Dorsolateral prefrontal cortex (tissue), 120 donors: ENCODE measurements at regions of chrX and their contacts with region 1.

Region 1: DNA sequence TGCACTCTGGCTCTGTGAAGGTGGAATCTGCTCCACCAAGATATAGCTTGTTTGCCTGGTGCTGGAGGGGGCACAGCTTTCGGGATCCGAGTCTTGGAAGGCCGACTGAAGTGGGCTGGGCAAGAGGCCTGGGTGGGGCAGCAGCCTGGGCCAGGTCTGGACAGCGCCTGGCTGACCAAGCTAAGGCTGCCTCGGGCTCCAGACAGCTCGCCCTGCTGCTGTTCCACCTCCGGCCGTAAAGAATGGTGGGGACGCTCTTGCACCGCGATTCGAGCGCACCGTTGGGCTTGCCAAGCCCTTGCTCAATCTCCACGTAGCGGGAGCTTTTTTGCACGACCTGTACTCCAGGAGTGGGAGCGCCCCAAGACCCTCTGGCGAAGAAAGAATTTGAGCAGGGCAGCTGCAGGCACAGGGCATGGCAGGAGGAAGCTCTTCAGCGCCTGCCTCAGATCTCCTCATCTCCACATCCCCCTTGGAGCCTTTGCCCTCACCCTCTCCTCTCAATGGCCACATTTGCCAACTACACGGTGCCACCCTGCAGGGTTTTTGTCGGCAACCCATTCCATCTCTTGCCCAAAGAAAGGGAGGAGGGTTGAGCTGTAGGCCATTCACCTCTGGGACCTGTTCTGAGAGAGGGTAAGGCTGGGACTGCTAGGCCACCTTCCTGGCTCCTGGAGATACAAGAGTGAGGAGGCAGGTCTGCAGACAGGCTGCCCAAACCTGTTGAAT is 18.9 kb downstream of the CNGA2 start:
- DNase-seq: peak in 8 of 10 donors; percentile 18 to 76 (median 41)
- H3K4me3 ChIP-seq: no peak overlapping the region
- H3K27ac ChIP-seq: no peak overlapping the region
- H3K27me3 ChIP-seq: peaks cover 0 to 80% (median 47%) of the 10 kb centered on the region in 45 donors
- CTCF ChIP-seq: peak; percentile 35 to 78 (median 72)

Region 2: GRCh38 chrX:151346931-151347543 is 406.4 kb before region 1 on chrX:
- intact Hi-C with region 1: no loop called
- DNase-seq: no peak
- H3K4me3 ChIP-seq: no peak overlapping the region
- H3K27ac ChIP-seq: no peak overlapping the region
- H3K27me3 ChIP-seq: peaks cover 0 to 48% (median 10%) of the 10 kb centered on the region in 45 donors
- CTCF ChIP-seq: no peak

Region 3: GRCh38 chrX:151609222-151609621 is 144.3 kb before region 1 on chrX:
- intact Hi-C with region 1: no loop called
- DNase-seq: no peak
- H3K4me3 ChIP-seq: no peak overlapping the region
- H3K27ac ChIP-seq: no peak overlapping the region
- H3K27me3 ChIP-seq: peaks cover 0 to 54% (median 6%) of the 10 kb centered on the region in 45 donors
- CTCF ChIP-seq: no peak

Region 4: GRCh38 chrX:151713859-151714258 is 39.6 kb before region 1 on chrX:
- intact Hi-C with region 1: no loop called
- DNase-seq: no peak
- H3K4me3 ChIP-seq: no peak overlapping the region
- H3K27ac ChIP-seq: no peak overlapping the region
- H3K27me3 ChIP-seq: peaks cover 0 to 85% (median 20%) of the 10 kb centered on the region in 45 donors
- CTCF ChIP-seq: peak in 34 of 56 donors; percentile 14 to 45 (median 27)

Region 5: DNA sequence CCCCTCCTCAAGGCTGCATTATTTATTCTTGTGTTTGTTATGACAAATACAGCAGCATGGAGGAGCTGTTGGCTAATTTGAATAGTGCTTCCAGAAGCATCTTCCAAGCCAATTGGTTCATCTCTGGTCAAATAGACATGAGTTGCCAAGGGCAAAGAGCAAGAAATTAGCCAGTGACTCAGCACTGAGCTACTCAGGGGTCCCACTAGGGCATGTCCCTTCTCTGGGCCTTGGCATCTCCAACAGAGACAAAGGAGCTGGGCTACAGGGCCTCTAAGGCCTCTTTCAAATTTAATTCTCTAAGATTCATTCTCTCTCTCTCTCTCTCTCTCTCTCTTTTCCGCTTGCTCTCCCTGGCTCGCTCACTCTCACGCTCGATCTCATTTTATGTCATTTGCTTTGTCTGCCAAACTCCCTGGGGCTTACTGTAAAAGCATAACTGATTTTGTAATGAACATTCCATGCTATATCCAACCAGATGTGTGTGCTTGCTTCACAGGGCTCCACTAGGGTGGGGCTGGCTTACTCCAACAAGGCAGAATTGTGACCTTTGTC is 72.5 kb after region 1 on chrX:
- intact Hi-C with region 1: no loop called
- DNase-seq: no peak
- H3K4me3 ChIP-seq: no peak overlapping the region
- H3K27ac ChIP-seq: no peak overlapping the region
- H3K27me3 ChIP-seq: peaks cover 0 to 89% (median 41%) of the 10 kb centered on the region in 45 donors
- CTCF ChIP-seq: peak in 1 of 56 donors; percentile 9

Region 6: DNA sequence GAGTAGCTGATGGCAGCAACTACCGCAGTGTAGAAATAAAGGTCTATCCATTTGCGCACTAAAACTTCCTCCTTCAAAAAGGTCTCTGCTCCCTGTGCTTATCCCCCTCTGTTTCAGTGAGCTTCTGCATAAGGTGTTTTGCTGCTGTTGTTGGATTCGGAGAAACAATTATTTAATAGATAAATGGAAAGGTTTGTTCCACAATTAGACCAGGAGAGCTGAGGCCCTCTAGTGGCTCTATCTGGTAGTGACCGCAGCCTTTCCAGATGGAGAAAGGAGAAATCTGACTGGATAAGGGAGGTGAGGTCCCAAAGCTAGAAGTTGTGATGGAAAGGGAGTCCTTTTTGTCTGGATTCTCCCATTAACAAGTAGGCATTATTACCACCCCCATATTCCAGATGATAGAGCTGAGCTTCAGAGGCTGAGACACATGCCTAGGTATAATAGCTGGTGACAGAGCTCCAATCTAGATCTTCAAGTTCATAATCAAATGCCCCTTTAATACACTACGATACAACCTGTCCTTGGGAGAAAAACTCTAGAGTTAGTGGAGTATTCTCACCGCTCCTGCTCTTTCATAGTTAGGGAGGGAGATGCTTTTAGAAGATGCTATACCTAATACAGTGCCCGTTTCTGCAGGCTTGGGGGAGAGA is 879.1 kb after region 1 on chrX:
- intact Hi-C with region 1: loop called (anchors 2 kb)
- DNase-seq: peak in 6 of 10 donors; percentile 22 to 76 (median 58)
- H3K4me3 ChIP-seq: no peak overlapping the region
- H3K27ac ChIP-seq: no peak overlapping the region
- H3K27me3 ChIP-seq: peaks cover 0 to 78% (median 25%) of the 10 kb centered on the region in 45 donors
- CTCF ChIP-seq: peak; percentile 54 to 88 (median 76)

Region 7: DNA sequence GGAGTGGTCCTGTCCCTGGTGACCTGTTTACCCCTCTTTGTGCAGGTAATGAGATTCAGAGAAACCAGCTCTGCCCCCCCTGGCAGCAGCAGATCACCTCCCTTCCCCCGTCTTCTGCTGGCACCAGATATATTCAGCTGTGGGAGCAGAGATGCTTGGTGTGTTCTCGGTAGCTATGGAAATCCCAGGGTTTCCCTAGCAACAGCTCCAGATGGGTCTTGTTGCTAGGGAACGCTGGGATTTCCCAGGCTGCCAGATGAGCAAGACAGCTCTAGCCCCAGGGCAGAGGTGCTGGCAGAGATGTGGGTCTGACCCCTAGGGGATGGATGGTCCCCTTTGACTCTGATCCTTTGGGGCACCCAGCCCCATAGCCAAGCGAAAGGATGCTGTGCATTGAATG is 1056.9 kb after region 1 on chrX:
- intact Hi-C with region 1: loop called (anchors 5 kb)
- DNase-seq: peak in 4 of 10 donors; percentile 17 to 52 (median 44)
- H3K4me3 ChIP-seq: no peak overlapping the region
- H3K27ac ChIP-seq: no peak overlapping the region
- H3K27me3 ChIP-seq: peaks cover 0 to 79% (median 23%) of the 10 kb centered on the region in 45 donors
- CTCF ChIP-seq: no peak

Region 8: GRCh38 chrX:152817078-152817764 is 1063.7 kb after region 1 on chrX:
- intact Hi-C with region 1: loop called (anchors 5 kb)
- DNase-seq: peak in 5 of 10 donors; percentile 21 to 61 (median 53)
- H3K4me3 ChIP-seq: no peak overlapping the region
- H3K27ac ChIP-seq: no peak overlapping the region
- H3K27me3 ChIP-seq: peaks cover 0 to 69% (median 9%) of the 10 kb centered on the region in 45 donors
- CTCF ChIP-seq: peak in 51 of 56 donors; percentile 27 to 71 (median 53)

Region 9: DNA sequence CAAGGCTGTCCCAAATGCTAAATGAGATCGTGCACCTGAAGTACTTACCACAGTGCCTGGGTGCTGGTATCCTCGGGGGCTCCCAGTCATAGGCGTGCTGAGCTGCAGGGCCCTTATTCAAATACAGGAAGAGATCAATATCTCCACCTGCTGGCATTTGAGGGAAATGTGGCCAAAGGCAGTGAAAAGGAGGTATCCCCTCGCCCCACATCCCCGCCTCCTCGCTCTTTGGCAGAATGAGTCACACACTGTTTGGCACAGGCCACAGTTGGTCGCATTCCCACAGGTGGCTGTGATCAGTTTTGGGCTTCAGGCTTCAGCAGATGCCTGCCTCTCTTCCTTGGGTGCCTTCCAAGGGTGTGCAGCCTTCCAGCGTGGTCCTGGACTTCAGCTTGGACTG is 1172.8 kb after region 1 on chrX:
- intact Hi-C with region 1: loop called (anchors 10 kb)
- DNase-seq: peak in 6 of 10 donors; percentile 56 to 82 (median 64)
- H3K4me3 ChIP-seq: peak overlapping the region in 7 of 59 donors; percentile 7 to 43 (median 16)
- H3K27ac ChIP-seq: peak overlapping the region in 46 of 59 donors; percentile 8 to 90 (median 68)
- H3K27me3 ChIP-seq: peaks cover 0 to 64% (median 12%) of the 10 kb centered on the region in 45 donors
- CTCF ChIP-seq: peak in 55 of 56 donors; percentile 17 to 64 (median 50)